AG04449 (cell line): ENCODE measurements at regions of chr2 and their contacts with region 1.

Region 1: GRCh38 chr2:119476301-119477021 is 44.8 kb downstream of the TMEM37 start:
- DNase-seq: no peak
- H3K4me3 ChIP-seq: no peak overlapping the region
- CTCF ChIP-seq: peak; percentile 93

Region 2: GRCh38 chr2:119218478-119219064 is 257.9 kb before region 1 on chr2:
- CTCF ChIA-PET with region 1: interaction called, 15 read pairs
- POLR2A ChIA-PET with region 1: no interaction called
- DNase-seq: no peak
- H3K4me3 ChIP-seq: no peak overlapping the region
- CTCF ChIP-seq: peak; percentile 73

Region 3: GRCh38 chr2:119352357-119352756 is 124.1 kb before region 1 on chr2:
- CTCF ChIA-PET with region 1: no interaction called
- POLR2A ChIA-PET with region 1: no interaction called
- DNase-seq: no peak
- H3K4me3 ChIP-seq: no peak overlapping the region
- CTCF ChIP-seq: no peak

Region 4: DNA sequence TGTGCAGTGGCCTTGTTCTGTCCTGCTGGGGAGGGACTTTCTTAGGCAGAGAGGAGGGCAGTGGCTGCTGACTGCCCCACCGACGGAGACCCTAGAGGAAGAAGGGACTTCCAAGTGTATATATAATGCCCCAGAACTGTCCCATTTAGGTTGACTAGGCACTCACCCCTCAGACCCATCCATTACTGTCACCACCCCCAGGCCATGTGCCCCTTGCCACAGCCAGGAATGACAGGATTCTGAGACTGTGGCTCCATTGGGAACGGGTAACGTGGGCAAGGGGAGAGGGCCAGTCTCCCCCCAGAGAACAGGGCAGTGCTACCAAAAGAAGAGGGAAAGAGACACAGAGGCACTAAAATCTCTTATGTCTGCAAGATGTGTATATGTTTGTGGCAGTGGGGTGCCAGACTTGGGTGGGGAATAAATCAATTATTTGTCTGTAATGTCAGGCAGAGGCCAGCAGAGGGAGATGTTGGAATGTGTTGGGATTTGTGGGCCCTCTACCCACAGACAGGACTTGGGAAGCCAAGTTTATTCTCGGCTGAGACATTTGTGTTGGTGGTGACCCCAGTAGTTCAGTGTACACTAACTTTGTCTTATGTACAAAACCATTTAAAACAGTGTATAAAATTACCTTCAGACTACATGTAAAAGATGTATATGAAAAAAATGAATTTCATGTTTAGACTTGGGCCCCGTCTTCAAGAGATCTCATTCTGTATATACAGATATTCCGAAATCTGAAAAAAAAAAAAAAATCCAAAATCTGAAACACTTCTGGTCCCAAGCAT is 68.8 kb before region 1 on chr2:
- CTCF ChIA-PET with region 1: interaction called, 161 read pairs
- POLR2A ChIA-PET with region 1: no interaction called
- DNase-seq: no peak
- H3K4me3 ChIP-seq: no peak overlapping the region
- CTCF ChIP-seq: peak; percentile 68

Region 5: GRCh38 chr2:119414894-119415293 is 61.6 kb before region 1 on chr2:
- CTCF ChIA-PET with region 1: interaction called, 161 read pairs
- POLR2A ChIA-PET with region 1: no interaction called
- DNase-seq: no peak
- H3K4me3 ChIP-seq: no peak overlapping the region
- CTCF ChIP-seq: no peak

Region 6: GRCh38 chr2:119459841-119460475 is 16.5 kb before region 1 on chr2:
- CTCF ChIA-PET with region 1: interaction called, 31 read pairs
- POLR2A ChIA-PET with region 1: no interaction called
- DNase-seq: no peak
- H3K4me3 ChIP-seq: no peak overlapping the region
- CTCF ChIP-seq: no peak

Region 7: GRCh38 chr2:119487434-119488244 is 11.2 kb after region 1 on chr2:
- CTCF ChIA-PET with region 1: interaction called, 38 read pairs
- POLR2A ChIA-PET with region 1: no interaction called
- DNase-seq: no peak
- H3K4me3 ChIP-seq: no peak overlapping the region
- CTCF ChIP-seq: no peak